ENCODE measurements at regions of chr10 and their contacts with region 1.

Region 1: DNA sequence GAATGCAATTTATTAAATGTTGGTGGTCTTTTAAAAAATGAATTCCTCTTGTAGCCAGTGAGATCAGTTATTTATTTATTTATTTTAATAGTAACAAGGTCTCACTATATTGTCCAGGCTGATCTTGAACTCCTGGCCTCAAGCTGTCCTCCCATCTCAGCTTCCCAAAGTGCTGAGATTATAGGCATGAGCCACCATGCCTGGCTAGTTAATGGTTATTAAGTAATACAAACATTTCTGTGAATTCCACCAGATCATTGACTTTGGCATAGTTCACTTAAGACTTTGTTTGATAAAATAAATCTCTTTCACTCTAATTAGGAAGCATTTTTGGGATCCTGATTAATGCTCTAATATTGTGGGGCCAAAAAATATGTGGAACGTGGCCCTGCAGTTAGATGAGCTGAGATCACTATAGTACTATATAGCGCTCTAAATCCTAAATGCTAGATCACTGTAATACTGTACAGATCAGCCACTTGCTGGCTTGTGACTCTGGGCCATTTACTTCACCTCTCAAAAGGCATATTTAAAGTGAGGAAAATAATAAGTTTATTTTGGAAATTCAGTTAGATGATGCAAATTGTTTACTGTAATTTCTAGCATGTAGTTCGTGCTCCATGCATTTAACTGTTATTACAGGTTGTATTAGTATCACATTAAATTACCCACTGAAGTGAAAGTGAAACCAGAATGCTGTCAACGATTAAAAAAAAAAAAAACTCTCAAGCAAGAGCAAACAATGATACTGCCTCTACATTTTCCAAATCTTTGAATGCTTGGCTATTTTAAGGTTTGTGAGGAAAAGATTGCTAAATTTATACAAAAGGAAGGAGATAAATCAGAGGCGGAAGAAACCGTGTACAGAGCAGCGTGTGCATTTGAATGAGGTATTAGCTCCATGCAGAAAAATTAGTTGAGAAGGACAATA is 15.9 kb upstream of the FAS start:
- DNase-seq: peak in 3 of 14 experiments; percentile 53 to 59 (median 57)
- ATAC-seq: peak; percentile 76
- H3K4me3 ChIP-seq: peak overlapping the region; percentile 63
- H3K4me3 Mint-ChIP-seq: peak overlapping the region; percentile 98
- H3K27ac ChIP-seq: peak overlapping the region; percentile 38 to 56
- H3K27ac Mint-ChIP-seq: peak overlapping the region; percentile 87
- H3K4me1 ChIP-seq: peaks cover 12% of the 10 kb centered on the region
- H3K4me1 Mint-ChIP-seq: peaks cover 17% of the 10 kb centered on the region
- H3K27me3 ChIP-seq: no peaks in the 10 kb centered on the region
- H3K27me3 Mint-ChIP-seq: no peaks in the 10 kb centered on the region
- CTCF ChIP-seq: no peak

Region 2: DNA sequence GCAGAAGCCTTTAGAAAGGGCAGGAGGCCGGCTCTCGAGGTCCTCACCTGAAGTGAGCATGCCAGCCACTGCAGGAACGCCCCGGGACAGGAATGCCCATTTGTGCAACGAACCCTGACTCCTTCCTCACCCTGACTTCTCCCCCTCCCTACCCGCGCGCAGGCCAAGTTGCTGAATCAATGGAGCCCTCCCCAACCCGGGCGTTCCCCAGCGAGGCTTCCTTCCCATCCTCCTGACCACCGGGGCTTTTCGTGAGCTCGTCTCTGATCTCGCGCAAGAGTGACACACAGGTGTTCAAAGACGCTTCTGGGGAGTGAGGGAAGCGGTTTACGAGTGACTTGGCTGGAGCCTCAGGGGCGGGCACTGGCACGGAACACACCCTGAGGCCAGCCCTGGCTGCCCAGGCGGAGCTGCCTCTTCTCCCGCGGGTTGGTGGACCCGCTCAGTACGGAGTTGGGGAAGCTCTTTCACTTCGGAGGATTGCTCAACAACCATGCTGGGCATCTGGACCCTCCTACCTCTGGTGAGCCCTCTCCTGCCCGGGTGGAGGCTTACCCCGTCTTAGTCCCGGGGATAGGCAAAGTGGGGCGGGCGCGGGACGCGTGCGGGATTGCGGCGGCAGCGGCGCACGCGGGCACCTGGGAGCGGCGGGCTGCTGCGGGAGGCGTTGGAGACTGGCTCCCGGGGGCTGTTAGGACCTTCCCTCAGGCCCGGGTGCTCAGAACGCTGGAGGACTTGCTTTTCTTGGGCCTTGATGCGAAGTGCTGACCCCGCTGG is 15.9 kb after region 1 on chr10 and contains the start of gene FAS:
- CTCF ChIA-PET with region 1: interaction called, 5 read pairs
- POLR2A ChIA-PET with region 1: interaction called, 25 read pairs
- intact Hi-C with region 1: loop called in 1 of 2 experiments (anchors 2 kb)
- DNase-seq: peak; percentile 53 to 96 (median 75)
- ATAC-seq: peak; percentile 75
- H3K4me3 ChIP-seq: peak within 1 kb of the TSS; percentile 94
- H3K4me3 Mint-ChIP-seq: peak within 1 kb of the TSS; percentile 98
- H3K27ac ChIP-seq: peak within 1 kb of the TSS; percentile 80 to 89
- H3K27ac Mint-ChIP-seq: peak within 1 kb of the TSS; percentile 93
- H3K4me1 ChIP-seq: peaks cover 30% of the 10 kb centered on the region
- H3K4me1 Mint-ChIP-seq: peaks cover 80% of the 10 kb centered on the region
- H3K27me3 ChIP-seq: no peaks in the 10 kb centered on the region
- H3K27me3 Mint-ChIP-seq: no peaks in the 10 kb centered on the region
- CTCF ChIP-seq: no peak
- total RNA-seq, gene FAS: 23.8 to 28.2 TPM

Measured in CD4-positive, alpha-beta T cell (primary cell).